ENCODE measurements at regions of chr15 and their contacts with region 1.

Region 1: DNA sequence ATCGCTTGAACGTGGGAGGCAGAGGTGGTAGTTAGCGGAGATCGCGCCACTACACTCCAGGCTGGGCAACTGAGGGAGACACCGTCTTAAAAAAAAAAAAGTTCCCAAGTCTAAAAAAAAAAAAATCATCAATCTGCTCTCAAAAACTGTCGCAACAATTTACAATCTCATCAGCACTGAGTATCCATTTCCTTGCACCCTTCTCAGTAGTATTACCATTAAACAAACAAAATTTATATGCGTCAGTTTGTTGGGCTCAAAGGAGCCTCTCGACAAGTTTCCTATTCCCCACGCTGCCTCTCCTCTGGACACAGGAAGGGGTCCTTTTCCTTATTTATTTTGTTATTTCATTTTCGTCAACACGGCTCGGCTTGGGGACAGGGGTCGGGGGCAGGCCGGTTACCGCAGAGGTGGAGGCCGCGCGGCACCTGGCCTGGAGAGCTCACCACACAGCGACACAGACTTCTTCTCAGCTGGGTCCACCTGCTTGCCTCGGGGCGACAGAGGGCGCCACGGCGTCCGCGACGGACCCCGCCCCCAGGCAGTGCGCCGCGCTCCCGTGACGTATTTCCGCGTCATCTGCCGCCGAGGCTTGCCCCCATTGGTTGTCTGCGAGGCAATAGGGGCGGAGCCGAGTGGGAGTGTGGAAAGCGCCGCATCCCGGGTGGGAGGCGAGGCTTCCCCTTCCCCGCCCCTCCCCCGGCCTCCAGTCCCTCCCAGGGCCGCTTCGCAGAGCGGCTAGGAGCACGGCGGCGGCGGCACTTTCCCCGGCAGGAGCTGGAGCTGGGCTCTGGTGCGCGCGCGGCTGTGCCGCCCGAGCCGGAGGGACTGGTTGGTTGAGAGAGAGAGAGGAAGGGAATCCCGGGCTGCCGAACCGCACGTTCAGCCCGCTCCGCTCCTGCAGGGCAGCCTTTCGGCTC is at the start of gene MAP2K1:
- DNase-seq: peak; percentile 99
- H3K4me3 Mint-ChIP-seq: peak within 1 kb of the TSS; percentile 95
- H3K27ac Mint-ChIP-seq: peak within 1 kb of the TSS; percentile 92
- H3K4me1 Mint-ChIP-seq: peaks cover 52% of the 10 kb centered on the region
- H3K27me3 Mint-ChIP-seq: no peaks in the 10 kb centered on the region
- total RNA-seq, gene MAP2K1: 91.8 to 91.9 TPM

Region 2: DNA sequence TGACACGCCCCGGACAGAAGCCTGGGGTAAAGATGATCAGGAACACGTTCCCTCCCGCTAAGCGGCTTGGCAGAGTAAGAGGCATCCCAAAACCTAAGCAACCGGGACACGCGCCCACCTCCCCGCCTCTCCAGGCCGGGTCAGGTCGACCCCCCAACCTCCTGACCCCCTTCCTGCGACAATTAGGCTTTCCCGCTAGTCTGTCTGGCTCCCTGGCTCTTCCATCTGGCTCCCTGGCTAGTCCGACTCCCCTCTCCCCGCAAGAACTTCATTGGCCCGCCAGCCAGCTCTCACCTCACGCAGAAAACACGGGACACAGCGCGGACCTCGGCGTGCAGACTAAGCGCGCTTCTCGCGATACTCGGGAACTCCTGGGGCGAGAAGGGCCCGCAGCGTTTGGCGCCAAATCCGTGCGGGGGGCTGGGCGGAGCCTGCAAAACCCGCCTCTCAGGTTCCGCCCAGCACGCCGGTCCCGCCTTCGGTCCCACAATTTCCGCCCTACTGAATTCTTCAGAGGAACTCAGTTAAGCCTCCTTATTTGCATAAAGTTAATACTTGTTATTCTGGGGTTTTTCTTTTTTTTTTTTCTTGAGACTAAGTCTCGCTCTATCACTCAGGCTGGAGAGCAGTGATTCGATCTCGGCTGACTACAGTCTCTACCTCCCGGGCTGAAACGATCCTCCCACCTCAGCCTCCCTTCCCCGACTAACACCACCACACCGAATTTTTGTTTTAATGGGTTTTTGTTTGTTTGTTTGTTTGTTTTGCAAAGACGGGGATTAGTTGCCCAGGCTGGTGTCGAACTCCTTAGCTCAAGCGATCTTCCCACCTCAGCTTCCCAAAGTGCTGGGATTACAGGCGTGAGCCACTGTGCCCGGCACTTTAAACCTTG is 29.9 kb before region 1 on chr15 and contains the start of gene TIPIN:
- CTCF ChIA-PET with region 1: interaction called, 7 read pairs
- POLR2A ChIA-PET with region 1: interaction called, 14 read pairs
- intact Hi-C with region 1: loop called (anchors 1 kb)
- DNase-seq: peak; percentile 99
- H3K4me3 Mint-ChIP-seq: peak within 1 kb of the TSS; percentile 93
- H3K27ac Mint-ChIP-seq: peak within 1 kb of the TSS; percentile 91
- H3K4me1 Mint-ChIP-seq: peaks cover 25% of the 10 kb centered on the region
- H3K27me3 Mint-ChIP-seq: no peaks in the 10 kb centered on the region
- total RNA-seq, gene TIPIN: 43.2 to 45.9 TPM

Region 3: DNA sequence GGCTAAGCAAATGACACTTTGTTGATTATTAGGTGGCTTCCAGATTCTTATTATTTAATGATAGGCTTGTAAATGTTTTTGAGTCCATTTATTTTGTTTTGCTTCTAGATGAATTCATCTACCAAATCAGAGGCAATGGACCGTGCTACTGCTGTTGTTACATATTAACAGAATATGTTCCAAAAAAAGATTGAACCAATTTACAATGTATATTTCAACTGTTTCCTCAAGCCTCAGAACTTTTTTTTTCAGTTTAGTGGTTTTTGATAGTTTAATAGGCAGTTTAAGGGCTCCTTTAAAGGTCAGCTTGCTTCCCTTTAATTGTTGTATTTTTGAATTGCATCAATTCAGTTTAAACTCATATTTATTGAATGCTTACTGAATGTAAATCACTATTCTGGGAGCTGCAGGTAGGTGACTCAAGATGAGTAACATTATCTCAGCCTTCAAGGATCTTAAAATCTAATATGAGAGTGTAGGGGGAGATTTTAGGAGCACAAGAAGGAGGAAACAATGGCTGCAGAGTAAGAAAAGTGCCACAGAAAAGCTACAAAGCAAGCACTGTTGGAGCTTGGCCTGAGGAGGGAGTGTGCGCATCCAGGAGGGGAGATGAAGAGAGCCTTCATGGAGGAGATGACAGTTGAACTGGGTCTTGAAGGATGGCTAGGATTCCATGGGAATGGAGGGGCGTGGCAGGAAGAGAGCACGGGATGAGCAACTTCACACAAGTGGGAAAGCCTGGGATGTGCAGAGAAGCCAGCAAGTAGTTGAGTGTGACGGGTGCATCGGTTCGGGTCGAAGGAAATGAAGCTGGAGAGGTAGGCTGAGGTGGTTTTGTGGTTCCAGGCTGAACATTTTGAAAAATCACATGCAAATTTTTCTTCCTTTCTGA is 14.9 kb after region 1 on chr15:
- CTCF ChIA-PET with region 1: interaction called, 7 read pairs
- POLR2A ChIA-PET with region 1: interaction called, 10 read pairs
- intact Hi-C with region 1: loop called (anchors 1 kb)
- DNase-seq: peak; percentile 33
- H3K4me3 Mint-ChIP-seq: peak overlapping the region; percentile 42
- H3K27ac Mint-ChIP-seq: peak overlapping the region; percentile 18
- H3K4me1 Mint-ChIP-seq: peaks cover 74% of the 10 kb centered on the region
- H3K27me3 Mint-ChIP-seq: no peaks in the 10 kb centered on the region

Region 4: GRCh38 chr15:66472176-66472999 is 85.9 kb after region 1 on chr15:
- CTCF ChIA-PET with region 1: interaction called, 6 read pairs
- POLR2A ChIA-PET with region 1: no interaction called
- intact Hi-C with region 1: loop called (anchors 2 kb)
- DNase-seq: peak; percentile 67
- H3K4me3 Mint-ChIP-seq: peak overlapping the region; percentile 57
- H3K27ac Mint-ChIP-seq: peak overlapping the region; percentile 75
- H3K4me1 Mint-ChIP-seq: peaks cover 57% of the 10 kb centered on the region
- H3K27me3 Mint-ChIP-seq: no peaks in the 10 kb centered on the region

Region 5: DNA sequence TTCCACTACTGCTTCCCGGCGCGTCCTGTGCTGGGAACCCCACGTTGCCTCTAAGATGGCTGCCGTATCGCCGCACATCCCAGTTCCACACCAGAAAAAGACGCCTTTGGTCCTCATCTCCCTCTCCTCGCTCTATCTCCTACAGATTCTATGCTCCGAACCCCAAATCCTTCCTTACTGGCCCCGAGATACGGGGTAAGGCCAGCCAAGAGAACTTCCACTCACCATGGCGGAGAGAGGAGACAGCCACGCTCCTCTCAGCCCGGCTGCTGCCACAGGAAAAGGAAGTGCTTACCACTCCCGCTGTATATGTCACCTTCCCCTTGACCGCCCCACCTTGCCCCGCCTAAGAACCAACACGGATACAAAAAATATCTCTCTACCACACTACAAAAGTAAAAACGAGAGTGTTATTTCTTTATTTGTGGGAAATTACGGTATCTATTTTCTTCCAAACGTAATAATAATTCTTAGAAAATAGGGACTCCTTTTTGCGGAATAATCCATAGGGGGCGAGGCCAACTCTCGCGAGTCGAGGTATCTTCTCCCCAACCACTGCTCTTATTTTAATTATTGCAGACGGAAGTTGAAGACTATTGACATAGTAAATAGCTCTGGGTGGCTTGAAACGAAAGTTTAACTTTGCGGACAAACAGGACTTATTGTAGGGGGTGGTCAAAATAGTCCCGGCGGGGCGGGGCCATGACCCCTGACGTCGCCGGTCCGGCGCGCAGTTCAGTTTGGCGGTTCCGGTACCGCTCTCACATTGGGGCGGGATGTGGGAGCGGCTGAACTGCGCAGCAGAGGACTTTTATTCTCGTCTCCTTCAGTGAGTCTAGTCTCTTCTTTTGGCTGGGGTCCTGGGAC is 118.3 kb after region 1 on chr15 and contains the starts of genes RPL4 and ZWILCH:
- CTCF ChIA-PET with region 1: interaction called, 11 read pairs
- POLR2A ChIA-PET with region 1: interaction called, 48 read pairs
- intact Hi-C with region 1: loop called (anchors 2 kb)
- DNase-seq: peak; percentile 82
- H3K4me3 Mint-ChIP-seq: peak within 1 kb of the TSS; percentile 95
- H3K27ac Mint-ChIP-seq: peak within 1 kb of the TSS; percentile 95
- H3K4me1 Mint-ChIP-seq: peaks cover 49% of the 10 kb centered on the region
- H3K27me3 Mint-ChIP-seq: no peaks in the 10 kb centered on the region
- total RNA-seq, gene RPL4: 5,151 to 5,211 TPM
- total RNA-seq, gene ZWILCH: 29.6 to 31.1 TPM

Measured in activated CD4-positive, alpha-beta memory T cell treated with anti-CD3 and anti-CD28 coated beads for 36 hours (primary cell).